OCI-LY7 (cell line): ENCODE measurements at regions of chr14 and their contacts with region 1.

Region 1: DNA sequence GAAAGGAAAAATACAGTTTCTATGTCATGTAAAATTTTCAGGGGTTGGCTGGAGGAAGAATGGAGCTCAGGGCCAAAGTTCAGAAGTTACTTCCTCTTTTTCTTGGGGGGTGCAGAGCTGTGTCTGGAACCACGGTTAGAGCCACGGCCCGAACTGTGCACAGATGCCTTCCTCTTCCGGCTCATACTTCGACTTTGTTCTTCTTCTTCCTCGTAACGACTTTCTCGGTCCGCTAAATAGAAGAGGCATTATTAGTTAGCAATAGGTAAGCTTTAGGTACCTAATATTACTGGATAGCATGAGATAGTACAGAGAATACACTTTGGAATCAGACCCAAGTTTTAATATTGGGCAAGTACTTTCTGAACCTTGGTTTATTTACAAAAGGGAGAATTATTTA is 31.2 kb downstream of the SUPT16H start:
- DNase-seq: peak; percentile 6
- H3K4me3 ChIP-seq: no peak overlapping the region
- H3K27ac ChIP-seq: no peak overlapping the region
- H3K4me1 ChIP-seq: no peaks in the 10 kb centered on the region
- CTCF ChIP-seq: no peak

Region 2: GRCh38 chr14:21395444-21395843 is 42.9 kb after region 1 on chr14:
- CTCF ChIA-PET with region 1: no interaction called
- POLR2A ChIA-PET with region 1: interaction called, 4 read pairs
- intact Hi-C with region 1: loop called (anchors 5 kb)
- DNase-seq: no peak
- H3K4me3 ChIP-seq: no peak overlapping the region
- H3K27ac ChIP-seq: no peak overlapping the region
- H3K4me1 ChIP-seq: no peaks in the 10 kb centered on the region
- CTCF ChIP-seq: peak; percentile 44; the same call in 1 of the 2 replicates